Lower leg skin (tissue), 4 donors: ENCODE measurements at regions of chr16 and their contacts with region 1.

Region 1: DNA sequence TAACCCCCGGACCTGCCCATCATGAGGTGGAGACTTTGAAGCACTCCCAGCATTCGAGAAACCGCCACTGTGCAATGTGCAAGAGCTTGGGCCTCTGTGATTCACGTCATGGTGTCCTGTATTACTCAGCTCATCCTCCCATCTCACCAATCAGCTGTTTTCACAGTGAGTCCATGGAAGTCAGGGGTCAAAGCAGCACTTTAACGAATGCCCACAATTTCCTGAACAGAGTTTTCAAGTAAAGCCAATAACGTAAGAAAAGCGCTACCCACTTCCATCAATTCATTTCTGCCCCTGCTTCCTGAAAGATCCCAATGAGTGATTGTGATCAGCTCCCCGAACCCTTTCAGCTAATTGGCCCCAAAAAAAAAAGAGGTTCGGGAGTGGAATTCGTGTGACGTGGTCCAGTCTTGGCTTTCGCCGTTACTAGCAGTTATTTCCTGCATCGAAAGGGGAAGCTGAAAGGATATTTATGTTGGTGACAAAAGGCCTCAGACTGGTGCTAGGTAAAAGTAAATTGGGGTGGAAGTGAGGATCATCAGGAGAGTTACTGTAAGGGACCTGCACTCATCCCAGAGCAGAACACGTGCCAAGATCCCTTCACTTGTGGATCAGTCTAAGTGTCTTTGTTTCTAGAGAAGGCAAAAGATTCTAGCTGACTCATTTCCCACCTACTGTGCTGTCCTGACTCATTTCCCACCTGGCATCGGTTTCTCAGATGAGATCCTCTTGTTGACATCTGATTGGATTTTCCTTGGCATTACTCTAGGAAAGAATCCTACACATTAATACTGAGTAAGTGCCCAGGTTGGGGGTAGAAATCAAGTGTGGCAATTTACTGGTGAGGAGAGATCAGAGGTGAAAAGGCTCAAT is 136.7 kb upstream of the NUDT7 start:
- DNase-seq: no peak
- H3K4me3 ChIP-seq: no peak overlapping the region
- CTCF ChIP-seq: no peak
- POLR2A ChIP-seq: no peak

Region 2: GRCh38 chr16:77234611-77235010 is 351.0 kb before region 1 on chr16:
- intact Hi-C with region 1: loop called (anchors 5 kb)
- DNase-seq: peak in 1 of 2 donors; percentile 45
- H3K4me3 ChIP-seq: no peak overlapping the region
- CTCF ChIP-seq: no peak
- POLR2A ChIP-seq: no peak

Region 3: DNA sequence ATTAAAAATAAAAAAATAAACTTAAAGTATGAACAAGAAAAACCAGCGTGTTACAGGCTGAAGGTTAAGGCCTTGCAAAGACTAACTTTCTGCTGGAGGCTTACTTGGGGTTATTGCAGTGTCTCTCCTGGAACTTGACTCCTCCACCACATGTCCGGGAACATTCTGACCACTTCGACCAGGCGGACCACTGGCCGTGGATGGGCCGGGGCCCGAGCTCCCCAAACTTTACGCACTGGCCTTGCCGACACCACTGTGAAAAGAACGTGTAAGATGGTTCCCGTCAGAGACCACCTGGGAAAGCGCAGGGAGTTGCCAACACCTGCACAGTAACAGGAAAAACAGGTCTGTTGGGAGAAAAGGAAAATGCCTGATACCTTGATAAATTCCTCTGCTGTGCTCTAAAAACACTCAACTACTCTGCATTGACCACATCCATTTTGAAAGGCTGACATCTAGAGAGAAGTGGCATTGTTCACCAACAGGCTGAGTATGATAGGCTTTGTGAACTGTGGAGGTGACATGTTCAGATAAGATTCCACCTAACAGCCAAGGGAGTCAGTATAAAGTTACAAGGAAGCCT is 249.9 kb before region 1 on chr16:
- intact Hi-C with region 1: no loop called
- DNase-seq: no peak
- H3K4me3 ChIP-seq: no peak overlapping the region
- CTCF ChIP-seq: no peak
- POLR2A ChIP-seq: no peak

Region 4: DNA sequence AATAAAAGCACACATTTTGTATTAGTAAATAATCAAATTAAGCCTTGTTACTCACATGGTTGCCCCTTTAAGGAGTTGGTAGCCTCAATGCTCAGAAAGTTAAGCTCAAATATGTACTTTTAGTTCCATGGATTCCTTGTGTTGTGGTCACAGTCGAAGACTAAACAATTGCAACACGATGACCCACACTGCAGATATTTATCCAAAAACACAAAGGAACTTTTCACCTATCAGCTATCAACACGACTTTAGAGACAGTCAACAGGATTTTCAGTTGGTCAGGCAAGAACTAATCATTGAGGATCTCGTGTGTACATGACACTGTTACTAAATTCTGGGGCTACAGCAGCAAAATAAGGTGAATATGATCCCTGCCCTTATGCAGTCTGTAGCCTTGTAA is 89.3 kb after region 1 on chr16:
- intact Hi-C with region 1: no loop called
- DNase-seq: no peak
- H3K4me3 ChIP-seq: no peak overlapping the region
- CTCF ChIP-seq: no peak
- POLR2A ChIP-seq: no peak

Region 5: DNA sequence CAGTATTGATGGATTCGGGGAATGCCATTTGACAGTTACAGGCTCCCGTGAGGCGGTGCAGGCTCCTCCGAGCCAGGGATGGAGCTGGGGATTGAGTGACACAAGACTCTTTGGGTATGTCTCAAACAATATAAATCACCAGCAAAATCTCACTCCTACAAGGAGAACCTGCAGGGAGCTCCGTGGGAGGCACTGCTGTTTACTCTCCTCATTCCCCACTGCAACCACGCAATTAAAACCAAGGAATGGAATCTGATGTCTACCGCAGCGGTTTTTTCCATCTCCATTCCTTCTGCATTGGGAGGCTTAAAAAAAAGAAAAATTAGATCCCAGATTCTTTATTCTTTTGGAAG is 671.7 kb after region 1 on chr16:
- intact Hi-C with region 1: no loop called
- DNase-seq: no peak
- H3K4me3 ChIP-seq: no peak overlapping the region
- CTCF ChIP-seq: no peak
- POLR2A ChIP-seq: no peak